PC-9 (cell line): ENCODE measurements at regions of chr7 and their contacts with region 1.

Region 1: GRCh38 chr7:26843705-26844104 is 20.7 kb downstream of the SKAP2 start:
- DNase-seq: no peak
- H3K4me3 ChIP-seq: no peak overlapping the region
- H3K27ac ChIP-seq: no peak overlapping the region
- H3K4me1 ChIP-seq: no peaks in the 10 kb centered on the region
- H3K27me3 ChIP-seq: no peaks in the 10 kb centered on the region
- CTCF ChIP-seq: peak; percentile 55; the same call in 1 of the 2 replicates

Region 2: DNA sequence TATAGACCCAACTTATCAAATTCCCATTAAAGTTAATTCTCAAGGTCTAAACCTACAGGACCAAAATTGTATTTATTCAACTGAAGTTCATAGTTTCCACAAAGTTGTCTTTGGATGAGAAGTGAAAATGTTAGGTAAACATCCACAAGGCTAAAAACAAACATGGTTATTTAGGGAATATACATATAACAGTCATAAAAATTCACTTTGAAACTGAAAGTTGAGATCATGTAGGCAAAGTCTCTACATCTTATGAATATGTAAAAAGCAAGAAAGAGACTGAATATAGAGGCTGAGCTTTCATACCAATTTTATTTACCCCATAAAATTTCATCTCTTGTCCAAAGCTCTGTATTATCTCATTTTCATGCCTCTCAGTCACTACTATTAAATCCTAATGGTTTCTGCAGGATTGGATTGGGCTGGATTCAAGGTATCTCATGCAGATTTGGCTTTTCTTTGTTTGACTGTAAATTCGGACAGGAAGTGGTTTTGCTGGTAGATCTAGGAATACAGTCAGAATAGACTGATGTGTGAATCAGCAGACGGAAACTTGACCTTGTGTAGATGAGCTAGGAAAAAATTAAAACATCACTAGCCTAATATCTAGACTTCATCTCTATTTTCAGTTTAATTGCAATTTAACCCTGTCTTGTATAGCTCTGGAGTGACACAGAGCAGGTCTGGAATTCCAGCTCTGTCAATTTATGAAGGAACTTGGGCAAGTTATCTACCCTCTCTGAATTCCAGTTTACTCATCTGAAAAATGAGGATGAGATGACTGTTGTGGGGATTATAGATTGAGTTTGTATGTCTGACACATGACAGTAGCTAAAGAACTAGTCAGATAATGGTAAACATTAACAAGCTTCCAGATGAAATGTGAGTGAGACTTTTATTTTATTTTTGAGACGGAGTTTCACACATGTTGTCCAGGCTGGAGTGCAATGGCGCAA is 48.0 kb after region 1 on chr7:
- CTCF ChIA-PET with region 1: no interaction called
- POLR2A ChIA-PET with region 1: no interaction called
- intact Hi-C with region 1: loop called (anchors 2 kb)
- DNase-seq: no peak
- H3K4me3 ChIP-seq: no peak overlapping the region
- H3K27ac ChIP-seq: no peak overlapping the region
- H3K4me1 ChIP-seq: peaks cover 7% of the 10 kb centered on the region
- H3K27me3 ChIP-seq: no peaks in the 10 kb centered on the region
- CTCF ChIP-seq: no peak

Region 3: GRCh38 chr7:27295236-27295635 is 451.5 kb after region 1 on chr7:
- CTCF ChIA-PET with region 1: no interaction called
- POLR2A ChIA-PET with region 1: no interaction called
- intact Hi-C with region 1: no loop called
- DNase-seq: no peak
- H3K4me3 ChIP-seq: no peak overlapping the region
- H3K27ac ChIP-seq: no peak overlapping the region
- H3K4me1 ChIP-seq: no peaks in the 10 kb centered on the region
- H3K27me3 ChIP-seq: no peaks in the 10 kb centered on the region
- CTCF ChIP-seq: no peak